H1 (cell line): ENCODE measurements at regions of chr15 and their contacts with region 1.

Region 1: DNA sequence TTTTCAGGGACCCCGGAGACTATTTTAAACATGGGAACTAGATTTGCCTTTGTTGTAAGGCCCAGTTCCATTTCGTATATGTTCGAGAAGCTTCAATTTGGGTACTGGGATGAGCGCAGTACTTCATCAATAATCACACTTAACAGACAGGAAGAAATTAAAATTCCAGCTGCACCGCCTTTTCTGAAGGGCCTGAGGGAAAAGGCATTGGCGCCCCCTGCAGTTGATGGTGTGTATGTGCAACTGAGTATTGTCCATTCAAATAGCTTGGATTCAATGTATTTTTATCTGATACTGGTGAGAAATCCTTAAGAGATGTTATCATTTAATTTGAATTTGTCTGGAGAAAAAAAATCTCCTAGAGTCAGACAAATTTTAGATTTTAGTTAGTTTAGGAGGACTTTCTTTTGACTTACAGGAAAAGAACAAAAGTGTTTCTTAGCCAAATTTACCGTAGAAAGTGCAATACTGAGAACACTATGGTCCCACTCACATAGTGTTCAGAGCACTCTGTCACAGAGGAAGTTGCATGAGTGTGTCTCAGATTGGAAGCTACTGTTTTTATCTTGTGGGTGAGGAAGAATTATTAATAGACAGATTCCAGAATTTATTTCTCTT is 5.4 kb upstream of the ALDH1A2 start:
- DNase-seq: peak in 1 of 2 experiments; percentile 75
- H3K4me3 ChIP-seq: no peak overlapping the region
- H3K27ac ChIP-seq: no peak overlapping the region
- H3K4me1 ChIP-seq: no peaks in the 10 kb centered on the region
- H3K27me3 ChIP-seq: peaks cover 0 to 20% (median 10%) of the 10 kb centered on the region in 4 experiments; a peak in 6 of 7 replicates
- CTCF ChIP-seq: peak; percentile 69 to 87 (median 78)
- EP300 ChIP-seq: no peak
- POLR2A ChIP-seq: no peak
- RAD21 ChIP-seq: peak; percentile 90 to 92

Region 2: GRCh38 chr15:57751177-57751800 is 319.6 kb before region 1 on chr15:
- CTCF ChIA-PET with region 1: interaction called, 88 read pairs
- POLR2A ChIA-PET with region 1: no interaction called
- DNase-seq: no peak
- H3K4me3 ChIP-seq: no peak overlapping the region
- H3K27ac ChIP-seq: no peak overlapping the region
- H3K4me1 ChIP-seq: peaks cover 9 to 12% (median 10%) of the 10 kb centered on the region in 4 experiments
- H3K27me3 ChIP-seq: no peaks in the 10 kb centered on the region
- CTCF ChIP-seq: peak in 2 of 3 experiments; percentile 67 to 78; a peak in 3 of 4 replicates
- EP300 ChIP-seq: no peak
- POLR2A ChIP-seq: no peak
- RAD21 ChIP-seq: peak; percentile 76 to 82

Region 3: DNA sequence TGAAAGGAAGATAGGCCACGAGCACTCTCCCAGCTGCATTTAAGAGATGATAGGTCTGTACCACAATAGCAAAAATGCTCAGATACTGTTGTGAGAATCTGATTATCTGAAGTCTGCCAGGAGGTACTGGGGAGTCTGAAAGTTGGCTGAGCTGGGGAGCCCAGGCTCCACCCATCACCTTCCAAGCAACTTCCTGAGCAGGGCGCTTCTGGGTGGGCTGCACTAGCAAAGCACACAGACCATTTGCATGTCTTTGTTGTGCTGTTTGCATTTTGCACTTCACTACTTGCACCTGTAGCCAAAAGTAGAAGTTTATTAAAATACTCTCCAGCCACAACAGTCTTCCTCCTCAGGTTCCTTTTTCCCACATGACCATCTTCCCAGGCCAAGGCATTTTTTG is 138.6 kb before region 1 on chr15:
- CTCF ChIA-PET with region 1: interaction called, 11 read pairs
- POLR2A ChIA-PET with region 1: no interaction called
- DNase-seq: no peak
- H3K4me3 ChIP-seq: no peak overlapping the region
- H3K27ac ChIP-seq: no peak overlapping the region
- H3K4me1 ChIP-seq: 0 out of 7 replicates have a peak, but pooled peaks cover 0 to 6% (median 0%) of the 10 kb centered on the region in 4 experiments
- H3K27me3 ChIP-seq: no peaks in the 10 kb centered on the region; a peak in 1 of 7 replicates
- CTCF ChIP-seq: no peak
- EP300 ChIP-seq: no peak
- POLR2A ChIP-seq: no peak
- RAD21 ChIP-seq: no peak

Region 4: GRCh38 chr15:58056015-58056414 is 14.9 kb before region 1 on chr15:
- CTCF ChIA-PET with region 1: interaction called, 10 read pairs
- POLR2A ChIA-PET with region 1: no interaction called
- DNase-seq: no peak
- H3K4me3 ChIP-seq: no peak overlapping the region
- H3K27ac ChIP-seq: no peak overlapping the region
- H3K4me1 ChIP-seq: peaks cover 0 to 5% (median 0%) of the 10 kb centered on the region in 4 experiments; a peak in 1 of 7 replicates
- H3K27me3 ChIP-seq: peaks cover 0 to 4% (median 2%) of the 10 kb centered on the region in 4 experiments; a peak in 4 of 7 replicates
- CTCF ChIP-seq: peak in 1 of 3 experiments; percentile 25; a peak in 2 of 4 replicates
- EP300 ChIP-seq: no peak
- POLR2A ChIP-seq: no peak
- RAD21 ChIP-seq: no peak

Region 5: GRCh38 chr15:58171476-58172057 is 100.7 kb after region 1 on chr15:
- CTCF ChIA-PET with region 1: interaction called, 15 read pairs
- POLR2A ChIA-PET with region 1: no interaction called
- DNase-seq: no peak
- H3K4me3 ChIP-seq: no peak overlapping the region
- H3K27ac ChIP-seq: no peak overlapping the region
- H3K4me1 ChIP-seq: no peaks in the 10 kb centered on the region
- H3K27me3 ChIP-seq: no peaks in the 10 kb centered on the region; a peak in 1 of 7 replicates
- CTCF ChIP-seq: no peak
- EP300 ChIP-seq: no peak
- POLR2A ChIP-seq: no peak
- RAD21 ChIP-seq: no peak